ENCODE measurements at regions of chr11 and their contacts with region 1.

Region 1: DNA sequence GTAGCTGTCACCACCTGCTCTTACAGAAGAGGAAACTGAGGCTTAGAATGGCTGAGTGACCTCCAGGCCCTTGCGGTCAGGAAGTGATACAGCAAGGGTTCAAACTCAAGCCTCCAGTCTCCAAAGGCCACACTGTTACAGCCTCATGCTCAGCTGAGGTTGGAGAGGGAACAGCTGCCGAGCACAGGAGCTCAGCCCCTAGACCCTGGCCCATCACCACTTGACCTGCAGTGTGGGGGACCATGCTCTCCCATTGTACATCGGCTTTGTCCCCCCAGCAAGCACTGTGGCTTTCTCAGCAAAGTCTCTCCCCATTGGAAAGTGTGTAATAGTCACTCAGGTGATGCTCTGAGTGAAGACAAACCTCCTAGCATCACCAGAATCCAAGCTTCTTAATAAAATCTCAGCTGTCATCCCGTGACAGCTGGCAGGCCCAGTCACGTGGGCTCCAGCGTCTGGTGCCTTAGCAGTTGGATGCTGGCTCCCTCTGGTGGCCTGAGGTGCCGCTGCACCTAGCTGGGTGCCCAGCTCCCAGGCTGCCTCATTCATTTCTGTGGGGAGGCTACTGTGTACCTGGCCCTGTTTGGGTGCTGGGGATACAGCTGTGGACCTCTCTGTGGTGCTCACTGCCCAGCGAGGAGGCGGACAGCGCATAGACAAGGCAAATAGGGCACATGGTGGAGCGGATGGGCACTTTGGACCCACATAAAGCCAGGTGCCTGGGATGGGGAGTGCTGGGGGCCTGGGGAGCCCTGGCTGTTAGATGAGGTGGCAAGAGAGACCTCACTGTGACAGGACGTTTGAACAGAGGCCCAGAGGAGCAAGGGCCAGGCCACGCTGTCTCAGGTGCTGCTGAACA is 19.1 kb upstream of the MYRF start:
- DNase-seq: peak; percentile 90
- ATAC-seq: peak; percentile 97
- H3K4me3 Mint-ChIP-seq: no peak overlapping the region
- H3K27ac Mint-ChIP-seq: no peak overlapping the region
- H3K4me1 Mint-ChIP-seq: peaks cover 5% of the 10 kb centered on the region
- H3K27me3 Mint-ChIP-seq: no peaks in the 10 kb centered on the region
- CTCF ChIP-seq: peak; percentile 92

Region 2: DNA sequence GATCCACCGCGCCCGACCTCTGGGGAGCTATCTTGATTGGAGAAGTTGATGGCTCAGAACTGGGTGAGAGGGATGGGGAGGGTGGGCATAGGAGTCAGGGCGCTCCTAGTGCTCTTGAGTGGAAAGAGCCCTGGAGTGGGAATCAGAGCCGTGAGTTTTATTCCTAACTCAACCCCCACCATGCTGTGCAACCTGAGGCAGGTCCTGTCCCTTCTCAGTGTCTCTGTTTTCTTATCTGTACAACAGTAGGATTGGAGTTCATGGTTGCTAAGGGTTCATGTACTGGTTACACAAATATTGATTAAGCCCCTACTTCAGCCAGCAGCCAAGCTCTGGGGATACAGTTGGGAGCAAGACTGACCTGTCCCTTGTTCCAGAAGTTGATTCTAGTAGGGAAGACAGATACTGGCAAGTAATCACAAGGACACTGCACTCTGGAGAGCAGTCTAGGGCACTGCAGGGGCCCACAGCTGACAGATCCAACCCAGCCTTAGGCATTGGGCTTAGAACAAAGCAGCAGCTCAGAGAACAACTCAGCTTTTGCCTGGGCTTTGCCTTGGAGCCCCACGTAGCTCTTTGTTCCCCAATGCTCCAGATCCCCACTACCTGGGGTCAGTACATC is 65.6 kb before region 1 on chr11:
- CTCF ChIA-PET with region 1: interaction called, 14 read pairs
- POLR2A ChIA-PET with region 1: no interaction called
- intact Hi-C with region 1: no loop called
- DNase-seq: no peak
- ATAC-seq: no peak
- H3K4me3 Mint-ChIP-seq: no peak overlapping the region
- H3K27ac Mint-ChIP-seq: no peak overlapping the region
- H3K4me1 Mint-ChIP-seq: no peaks in the 10 kb centered on the region
- H3K27me3 Mint-ChIP-seq: peaks cover 7% of the 10 kb centered on the region
- CTCF ChIP-seq: no peak

Region 3: DNA sequence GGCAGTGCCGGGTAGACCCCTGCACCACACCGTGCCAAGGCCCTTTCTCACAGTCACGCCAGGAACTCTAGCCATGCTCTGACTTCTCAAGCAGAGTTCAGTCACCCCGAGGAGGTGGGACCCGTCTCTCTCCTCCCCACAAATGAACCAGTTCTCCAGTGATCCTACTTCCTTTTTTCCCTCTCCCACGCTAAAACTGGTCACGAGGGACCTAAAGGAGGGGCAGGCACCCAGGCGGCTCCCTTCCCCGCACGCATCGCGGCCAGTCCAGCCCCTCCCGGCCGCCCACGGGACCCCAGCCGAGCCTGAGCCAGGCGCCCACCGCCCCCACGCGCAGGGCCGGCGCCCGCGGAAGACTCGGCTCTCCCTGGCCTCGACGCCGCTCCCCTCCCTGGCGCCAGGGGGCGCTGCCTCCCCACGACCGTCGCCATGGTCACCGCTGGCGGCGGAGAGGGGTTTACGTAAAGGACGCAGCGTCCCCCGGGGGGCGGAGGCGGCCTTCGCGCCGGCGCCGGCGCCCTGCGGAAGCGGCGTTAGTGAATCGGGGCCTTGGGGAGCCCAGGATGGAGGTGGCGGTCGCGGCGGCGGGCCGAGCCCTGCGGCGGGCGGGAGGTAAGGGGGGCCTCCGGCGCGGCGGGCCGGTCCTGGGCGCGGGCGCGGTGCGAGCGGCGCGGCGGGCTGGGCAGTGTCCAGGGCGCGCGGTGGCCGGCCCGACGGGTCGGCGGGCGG is 53.3 kb before region 1 on chr11 and contains the start of gene DAGLA:
- CTCF ChIA-PET with region 1: interaction called, 67 read pairs
- POLR2A ChIA-PET with region 1: no interaction called
- intact Hi-C with region 1: loop called (anchors 2 kb)
- DNase-seq: peak; percentile 76
- ATAC-seq: peak; percentile 93
- H3K4me3 Mint-ChIP-seq: peak within 1 kb of the TSS; percentile 40
- H3K27ac Mint-ChIP-seq: no peak within 1 kb of the TSS
- H3K4me1 Mint-ChIP-seq: peaks cover 3% of the 10 kb centered on the region
- H3K27me3 Mint-ChIP-seq: peaks cover 23% of the 10 kb centered on the region
- CTCF ChIP-seq: peak; percentile 94
- total RNA-seq, gene DAGLA: 0.05 TPM in 1 of 2 experiments, not detected in the other

Region 4: DNA sequence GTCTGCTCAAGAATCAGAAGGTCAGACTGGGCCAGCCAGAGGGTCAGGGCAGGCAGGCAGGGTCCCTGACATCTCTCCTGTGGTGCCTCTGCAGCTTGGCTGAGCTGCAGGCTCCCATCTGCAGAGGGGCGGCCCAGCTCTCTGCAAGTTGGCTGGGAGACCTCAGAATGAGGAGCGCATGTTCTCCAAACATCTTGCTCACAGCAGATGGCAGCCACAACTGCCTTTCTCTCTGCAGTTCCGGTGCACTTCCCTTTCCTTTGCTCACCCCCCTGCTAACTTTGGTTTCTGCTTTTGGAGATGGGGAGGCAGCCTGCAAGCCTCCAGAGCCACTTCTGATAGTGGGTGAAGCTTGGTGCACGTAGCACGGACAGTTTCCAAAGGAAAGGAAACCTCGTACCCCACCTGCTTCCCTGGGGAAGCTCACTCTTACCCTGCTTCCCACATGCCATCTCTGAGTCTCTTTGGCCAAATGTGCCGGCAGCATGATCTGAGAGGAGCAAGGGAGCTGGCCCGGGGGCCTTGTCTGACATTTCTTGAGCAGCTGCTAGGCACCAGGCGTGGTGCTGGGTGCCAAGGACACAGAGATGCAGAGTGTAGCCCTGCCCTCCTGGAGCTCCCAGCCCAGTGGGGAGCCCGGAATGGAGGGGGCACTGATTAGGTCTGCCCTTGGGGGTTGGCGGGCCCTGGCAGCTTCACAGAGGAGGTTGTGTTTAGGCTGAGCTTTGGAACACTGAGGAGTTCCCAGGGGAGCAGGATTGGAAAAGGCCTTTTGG is 35.0 kb before region 1 on chr11:
- CTCF ChIA-PET with region 1: interaction called, 18 read pairs
- POLR2A ChIA-PET with region 1: no interaction called
- intact Hi-C with region 1: no loop called
- DNase-seq: no peak
- ATAC-seq: no peak
- H3K4me3 Mint-ChIP-seq: no peak overlapping the region
- H3K27ac Mint-ChIP-seq: no peak overlapping the region
- H3K4me1 Mint-ChIP-seq: peaks cover 29% of the 10 kb centered on the region
- H3K27me3 Mint-ChIP-seq: no peaks in the 10 kb centered on the region
- CTCF ChIP-seq: no peak

Region 5: GRCh38 chr11:61711498-61711897 is 21.9 kb before region 1 on chr11:
- CTCF ChIA-PET with region 1: interaction called, 12 read pairs
- POLR2A ChIA-PET with region 1: interaction called, 3 read pairs
- intact Hi-C with region 1: no loop called
- DNase-seq: no peak
- ATAC-seq: no peak
- H3K4me3 Mint-ChIP-seq: no peak overlapping the region
- H3K27ac Mint-ChIP-seq: no peak overlapping the region
- H3K4me1 Mint-ChIP-seq: no peaks in the 10 kb centered on the region
- H3K27me3 Mint-ChIP-seq: no peaks in the 10 kb centered on the region
- CTCF ChIP-seq: no peak

Region 6: DNA sequence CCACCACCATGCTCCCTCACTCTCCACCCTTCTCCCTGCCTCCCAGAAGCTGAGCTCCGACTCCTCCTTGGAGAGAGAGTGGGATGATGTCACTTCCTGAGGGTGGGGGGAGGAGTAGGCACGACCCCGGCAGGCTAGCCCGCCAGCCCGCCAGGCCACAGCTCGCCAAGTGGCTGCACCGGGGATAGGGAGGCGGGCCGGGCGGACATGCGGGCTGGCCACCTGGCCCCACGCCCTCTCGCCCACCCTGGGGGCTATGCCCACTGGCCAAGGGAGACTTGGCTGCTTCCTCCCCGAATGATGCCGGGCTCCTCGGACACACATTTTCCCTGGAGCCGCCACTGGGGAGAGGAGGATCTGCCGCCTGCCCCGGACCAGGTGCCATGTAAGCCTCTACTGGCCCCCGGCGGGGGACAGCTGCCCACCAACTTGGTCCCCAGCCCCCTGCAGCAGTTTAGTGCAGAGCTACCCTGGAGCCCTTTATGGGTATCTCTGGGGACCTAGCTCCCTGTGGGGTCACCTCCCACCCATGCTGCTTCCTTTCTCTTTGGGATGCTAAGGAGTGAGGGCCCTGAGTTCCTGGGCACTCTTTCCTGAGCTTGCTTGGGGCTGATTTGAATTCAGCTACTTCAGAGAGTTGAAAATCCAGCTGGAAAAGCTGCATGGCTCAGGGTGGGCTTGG is 14.6 kb before region 1 on chr11:
- CTCF ChIA-PET with region 1: interaction called, 18 read pairs
- POLR2A ChIA-PET with region 1: interaction called, 3 read pairs
- intact Hi-C with region 1: no loop called
- DNase-seq: no peak
- ATAC-seq: no peak
- H3K4me3 Mint-ChIP-seq: no peak overlapping the region
- H3K27ac Mint-ChIP-seq: no peak overlapping the region
- H3K4me1 Mint-ChIP-seq: no peaks in the 10 kb centered on the region
- H3K27me3 Mint-ChIP-seq: no peaks in the 10 kb centered on the region
- CTCF ChIP-seq: no peak

Region 7: DNA sequence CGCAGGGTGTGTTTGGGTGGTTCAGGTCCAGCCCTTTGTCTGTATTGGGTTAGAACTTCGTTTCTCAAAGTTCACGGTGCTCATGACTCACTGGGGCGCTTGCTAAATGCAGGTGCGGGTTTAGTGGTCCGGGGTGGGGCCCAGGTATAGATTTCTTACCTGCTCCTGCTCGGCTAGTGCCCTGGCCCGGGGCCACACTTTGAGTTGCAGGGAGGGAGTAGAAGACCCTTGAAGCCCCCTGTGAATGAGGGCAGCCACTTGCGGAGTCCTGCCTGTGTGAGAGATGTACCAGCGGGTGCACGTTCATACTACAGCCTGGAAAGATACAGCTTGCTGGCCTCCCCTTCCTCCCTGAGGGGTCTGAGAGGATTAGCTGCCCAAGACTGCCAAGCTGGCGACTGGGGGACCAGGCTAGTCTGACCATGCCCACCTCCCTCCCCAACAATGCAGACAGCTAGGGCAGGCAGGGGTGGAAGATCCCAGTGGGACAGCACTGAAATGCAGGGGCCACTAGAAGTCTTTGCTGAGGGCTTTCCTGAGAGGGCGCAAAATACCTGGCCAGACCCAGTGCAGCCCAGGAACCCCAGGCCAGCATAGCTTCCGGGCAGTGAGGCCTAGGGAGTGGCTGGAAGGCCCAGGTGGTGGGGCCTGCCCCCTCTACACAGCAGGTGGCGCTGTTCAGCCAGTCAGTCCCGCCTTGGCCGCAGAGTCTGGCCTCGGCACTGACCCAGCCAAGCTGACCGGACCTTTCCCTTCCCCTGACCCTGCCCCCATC is 14.0 kb after region 1 on chr11:
- CTCF ChIA-PET with region 1: interaction called, 16 read pairs
- POLR2A ChIA-PET with region 1: no interaction called
- intact Hi-C with region 1: no loop called
- DNase-seq: peak; percentile 67
- ATAC-seq: peak; percentile 70
- H3K4me3 Mint-ChIP-seq: no peak overlapping the region
- H3K27ac Mint-ChIP-seq: no peak overlapping the region
- H3K4me1 Mint-ChIP-seq: peaks cover 2% of the 10 kb centered on the region
- H3K27me3 Mint-ChIP-seq: peaks cover 21% of the 10 kb centered on the region
- CTCF ChIP-seq: peak; percentile 97

Region 8: DNA sequence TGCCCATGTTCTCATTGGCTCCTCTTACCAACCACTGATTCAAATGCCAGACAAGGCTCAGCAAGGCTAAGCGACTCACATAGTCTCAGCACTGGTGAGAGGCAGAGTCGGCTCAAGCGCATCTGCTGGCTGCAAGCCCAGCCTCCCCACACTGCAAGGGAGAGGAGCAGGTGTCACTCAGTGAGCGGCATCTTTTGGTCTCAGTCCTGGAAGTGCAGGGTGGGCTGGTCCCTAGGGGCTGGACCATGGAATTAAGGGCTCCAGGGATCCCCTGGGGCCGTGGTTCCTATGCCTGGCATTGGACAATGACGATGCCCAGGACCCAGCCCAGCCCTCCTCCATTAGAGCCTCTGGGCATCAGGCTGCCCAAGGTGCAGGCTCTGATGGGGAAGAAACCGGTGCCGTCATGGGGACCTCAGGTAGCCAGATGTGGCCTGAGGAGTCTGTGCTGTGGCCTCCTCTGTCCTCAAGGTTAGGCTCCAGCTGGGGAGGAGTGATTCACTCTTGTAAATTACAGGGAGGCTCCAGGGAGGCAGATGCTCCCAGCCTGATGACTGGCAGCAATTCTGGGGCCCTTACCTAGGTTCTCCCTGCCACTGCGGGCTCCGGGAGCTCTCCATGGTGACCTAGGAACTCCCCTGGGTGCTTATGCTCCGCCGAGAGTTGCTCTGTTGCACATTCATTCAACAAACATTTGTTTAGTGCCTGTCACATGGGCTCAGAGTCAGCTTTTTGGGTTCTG is 122.8 kb after region 1 on chr11:
- CTCF ChIA-PET with region 1: no interaction called
- POLR2A ChIA-PET with region 1: no interaction called
- intact Hi-C with region 1: no loop called
- DNase-seq: no peak
- ATAC-seq: no peak
- H3K4me3 Mint-ChIP-seq: no peak overlapping the region
- H3K27ac Mint-ChIP-seq: no peak overlapping the region
- H3K4me1 Mint-ChIP-seq: no peaks in the 10 kb centered on the region
- H3K27me3 Mint-ChIP-seq: no peaks in the 10 kb centered on the region
- CTCF ChIP-seq: no peak